GM18951 (cell line): ENCODE measurements at regions of chr15 and their contacts with region 1.

Region 1: DNA sequence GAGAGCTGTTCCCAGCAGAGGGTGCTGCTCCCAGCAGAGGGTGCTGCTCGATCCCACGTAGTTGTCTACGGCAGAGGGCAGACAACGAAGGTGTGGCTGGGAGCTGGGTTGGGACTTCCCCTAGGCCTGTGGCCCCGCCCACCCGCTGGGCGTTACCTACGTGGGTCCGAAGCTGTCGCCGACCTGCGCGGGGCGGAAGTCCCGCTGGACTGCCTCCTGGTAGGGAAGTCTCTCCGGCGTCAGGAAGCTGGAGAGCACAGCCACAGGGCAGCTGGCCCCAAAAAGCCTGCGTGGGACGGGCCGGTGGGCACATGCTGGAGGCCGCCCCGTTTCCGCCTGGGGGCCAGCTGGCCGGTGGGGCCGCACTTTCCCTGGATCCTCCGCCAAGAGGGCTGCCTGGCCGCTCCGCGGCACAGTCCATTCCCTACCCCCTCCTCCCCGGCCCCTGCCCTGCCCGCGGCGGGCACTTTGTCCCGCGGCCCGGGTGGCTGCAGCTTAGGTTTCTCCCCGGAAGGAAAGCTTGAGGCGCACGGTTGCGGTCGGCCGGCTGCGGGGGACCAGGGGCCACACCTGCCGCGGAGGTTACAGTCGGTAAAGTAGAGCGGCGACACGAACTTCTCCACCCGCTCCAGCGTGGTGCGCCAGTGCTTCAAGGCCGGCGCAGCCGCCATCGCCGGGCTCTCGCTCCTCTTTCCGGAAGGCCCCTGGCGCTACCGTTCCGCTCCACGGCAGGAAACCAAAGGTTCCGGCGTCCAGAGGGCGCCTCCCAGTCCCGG is at the start of gene MAN2C1:
- POLR2A ChIP-seq: peak; percentile 96

Region 2: GRCh38 chr15:75661091-75661777 is 293.1 kb after region 1 on chr15:
- in situ Hi-C with region 1: loop called (anchors 25 kb)
- POLR2A ChIP-seq: no peak